Ascending aorta (tissue), 2 donors: ENCODE measurements at regions of chr14 and their contacts with region 1.

Region 1: DNA sequence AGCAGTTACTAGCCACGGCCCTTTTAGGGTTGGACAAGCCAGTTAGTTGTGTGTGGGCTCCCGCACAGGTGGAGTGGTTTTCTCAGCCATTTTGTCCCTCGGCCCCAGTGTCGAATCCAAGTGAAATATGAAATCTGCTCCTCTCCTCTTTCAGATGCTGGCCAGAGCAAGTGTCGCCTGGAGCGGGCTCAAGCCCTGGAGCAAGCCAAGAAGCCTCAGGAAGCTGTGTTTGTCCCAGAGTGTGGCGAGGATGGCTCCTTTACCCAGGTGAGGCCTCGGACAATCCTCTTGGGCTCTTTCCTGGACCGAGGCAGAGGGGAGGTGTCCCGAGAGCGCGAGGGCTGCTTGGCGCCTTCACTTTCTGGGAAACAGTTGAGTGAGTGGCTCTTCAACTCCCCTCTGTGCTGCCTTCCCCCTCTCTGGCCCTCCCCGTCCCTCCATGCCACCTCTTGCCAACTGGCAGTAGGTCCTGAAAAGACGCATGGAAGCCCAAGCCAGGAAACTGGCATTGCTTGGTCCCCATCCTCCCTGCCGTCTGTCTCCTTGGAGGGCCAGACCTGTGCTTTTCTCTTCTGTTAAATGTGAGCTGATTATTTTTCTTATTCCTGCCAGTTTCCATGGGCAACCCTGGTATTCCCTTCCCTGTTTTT is 74.2 kb downstream of the SMOC1 start:
- DNase-seq: no peak
- H3K4me3 ChIP-seq: no peak overlapping the region
- H3K27ac ChIP-seq: no peak overlapping the region
- H3K4me1 ChIP-seq: no peaks in the 10 kb centered on the region
- H3K27me3 ChIP-seq: no peaks in the 10 kb centered on the region
- CTCF ChIP-seq: no peak

Region 2: GRCh38 chr14:69968681-69969080 is 15.3 kb after region 1 on chr14:
- intact Hi-C with region 1: loop called (anchors 1 kb)
- DNase-seq: no peak
- H3K4me3 ChIP-seq: no peak overlapping the region
- H3K27ac ChIP-seq: no peak overlapping the region
- H3K4me1 ChIP-seq: no peaks in the 10 kb centered on the region
- H3K27me3 ChIP-seq: no peaks in the 10 kb centered on the region
- CTCF ChIP-seq: no peak